Endothelial cell of umbilical vein (primary cell): ENCODE measurements at regions of chr9 and their contacts with region 1.

Region 1: GRCh38 chr9:33698267-33698666 is 97.1 kb upstream of the PRSS3 start:
- DNase-seq: no peak
- H3K4me3 ChIP-seq: no peak overlapping the region
- H3K27ac ChIP-seq: no peak overlapping the region
- H3K4me1 ChIP-seq: no peaks in the 10 kb centered on the region
- H3K27me3 ChIP-seq: peaks cover 10 to 24% of the 10 kb centered on the region in 2 experiments
- CTCF ChIP-seq: no peak
- POLR2A ChIP-seq: no peak

Region 2: DNA sequence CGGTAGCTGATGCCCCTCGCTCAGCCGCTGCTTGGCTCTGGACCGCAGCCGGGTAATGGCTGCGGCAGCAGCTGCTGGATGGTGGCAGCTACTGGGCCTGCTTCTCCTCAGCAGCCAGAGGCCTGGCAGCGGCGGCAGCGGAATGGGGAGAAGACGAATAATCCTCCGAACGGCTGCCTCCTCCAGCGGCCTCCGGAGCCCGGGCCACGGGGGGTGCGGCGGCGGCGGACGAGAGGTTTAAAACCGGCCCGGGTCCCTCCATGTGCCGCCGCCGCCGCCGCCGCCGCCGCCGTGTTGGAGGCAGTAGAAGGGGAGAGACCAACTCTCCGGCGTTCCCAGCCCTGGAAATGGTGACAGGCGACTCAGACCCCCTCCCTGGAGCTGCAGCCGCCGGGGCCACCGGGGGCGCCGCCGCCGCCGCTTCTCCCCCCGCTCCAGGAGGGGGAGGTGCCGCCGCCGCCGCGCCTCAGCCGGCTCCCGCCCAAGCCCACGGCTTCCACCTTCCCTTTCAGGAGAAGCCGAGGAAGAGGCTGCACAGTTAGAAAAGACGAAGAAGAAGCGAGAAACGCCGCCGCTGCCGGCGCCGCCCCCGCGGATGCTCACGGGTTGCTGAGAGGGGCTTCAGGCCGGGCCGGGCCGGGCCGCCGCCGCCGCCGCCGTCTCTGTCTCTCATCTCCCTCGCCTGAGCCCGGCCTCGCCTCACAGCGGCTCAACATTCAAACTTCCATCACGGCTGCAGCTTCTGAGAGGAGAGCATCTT is 21.3 kb before region 1 on chr9:
- CTCF ChIA-PET with region 1: no interaction called
- POLR2A ChIA-PET with region 1: no interaction called
- dilution Hi-C with region 1: no loop called
- intact Hi-C with region 1: loop called (anchors 1 kb)
- DNase-seq: peak; percentile 24
- H3K4me3 ChIP-seq: peak overlapping the region; percentile 26 to 34 (median 32)
- H3K27ac ChIP-seq: no peak overlapping the region
- H3K4me1 ChIP-seq: peaks cover 3% of the 10 kb centered on the region
- H3K27me3 ChIP-seq: peaks cover 16 to 57% of the 10 kb centered on the region in 2 experiments
- CTCF ChIP-seq: no peak
- POLR2A ChIP-seq: no peak

Region 3: DNA sequence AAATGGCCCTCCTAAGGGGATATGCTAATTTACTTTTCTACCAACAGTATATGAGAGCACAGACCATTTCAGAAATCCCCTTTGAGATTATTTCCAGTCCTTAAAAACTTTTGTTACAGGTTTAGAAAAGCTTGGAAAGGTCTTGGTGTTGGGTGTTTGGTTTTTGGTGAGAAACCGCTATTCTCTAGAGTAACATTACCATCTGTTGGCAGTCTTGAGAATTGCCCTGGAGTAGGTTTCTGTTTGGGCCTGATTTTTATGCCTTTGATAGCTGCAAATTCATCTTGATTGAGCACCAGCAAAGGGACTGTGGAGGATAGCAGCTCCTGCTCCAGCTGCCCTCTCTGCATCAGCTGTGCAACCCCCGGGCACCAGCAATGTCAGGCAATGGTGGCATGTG is 639.1 kb after region 1 on chr9:
- CTCF ChIA-PET with region 1: no interaction called
- POLR2A ChIA-PET with region 1: no interaction called
- dilution Hi-C with region 1: no loop called
- intact Hi-C with region 1: no loop called
- DNase-seq: no peak
- H3K4me3 ChIP-seq: no peak overlapping the region
- H3K27ac ChIP-seq: no peak overlapping the region
- H3K4me1 ChIP-seq: no peaks in the 10 kb centered on the region
- H3K27me3 ChIP-seq: no peaks in the 10 kb centered on the region
- CTCF ChIP-seq: no peak
- POLR2A ChIP-seq: no peak